Activated CD4-positive, alpha-beta memory T cell treated with anti-CD3 and anti-CD28 coated beads, Interleukin-2, amount 10 ng/mL, durations not matched to agents 7 days and 5 days (primary cell): ENCODE measurements at regions of chr16 and their contacts with region 1.

Region 1: GRCh38 chr16:79618692-79619050 is 18.1 kb upstream of the MAF start:
- DNase-seq: peak; percentile 65
- H3K4me3 Mint-ChIP-seq: peak overlapping the region; percentile 53
- H3K27ac Mint-ChIP-seq: peak overlapping the region; percentile 98
- H3K4me1 Mint-ChIP-seq: peaks cover 76% of the 10 kb centered on the region
- H3K27me3 Mint-ChIP-seq: peaks cover 9% of the 10 kb centered on the region

Region 2: GRCh38 chr16:79607587-79607986 is 11.1 kb before region 1 on chr16:
- CTCF ChIA-PET with region 1: interaction called, 17 read pairs
- POLR2A ChIA-PET with region 1: interaction called, 97 read pairs
- DNase-seq: no peak
- H3K4me3 Mint-ChIP-seq: no peak overlapping the region
- H3K27ac Mint-ChIP-seq: no peak overlapping the region
- H3K4me1 Mint-ChIP-seq: peaks cover 56% of the 10 kb centered on the region
- H3K27me3 Mint-ChIP-seq: peaks cover 2% of the 10 kb centered on the region

Region 3: GRCh38 chr16:79721270-79721669 is 102.6 kb after region 1 on chr16:
- CTCF ChIA-PET with region 1: no interaction called
- POLR2A ChIA-PET with region 1: no interaction called
- DNase-seq: no peak
- H3K4me3 Mint-ChIP-seq: no peak overlapping the region
- H3K27ac Mint-ChIP-seq: no peak overlapping the region
- H3K4me1 Mint-ChIP-seq: peaks cover 19% of the 10 kb centered on the region
- H3K27me3 Mint-ChIP-seq: no peaks in the 10 kb centered on the region